ENCODE measurements at regions of chr12 and their contacts with region 1.

Region 1: GRCh38 chr12:55728939-55729823 is at the start of gene CD63:
- DNase-seq: peak; percentile 97
- total RNA-seq, gene CD63: 1,385 to 1,570 TPM

Region 2: DNA sequence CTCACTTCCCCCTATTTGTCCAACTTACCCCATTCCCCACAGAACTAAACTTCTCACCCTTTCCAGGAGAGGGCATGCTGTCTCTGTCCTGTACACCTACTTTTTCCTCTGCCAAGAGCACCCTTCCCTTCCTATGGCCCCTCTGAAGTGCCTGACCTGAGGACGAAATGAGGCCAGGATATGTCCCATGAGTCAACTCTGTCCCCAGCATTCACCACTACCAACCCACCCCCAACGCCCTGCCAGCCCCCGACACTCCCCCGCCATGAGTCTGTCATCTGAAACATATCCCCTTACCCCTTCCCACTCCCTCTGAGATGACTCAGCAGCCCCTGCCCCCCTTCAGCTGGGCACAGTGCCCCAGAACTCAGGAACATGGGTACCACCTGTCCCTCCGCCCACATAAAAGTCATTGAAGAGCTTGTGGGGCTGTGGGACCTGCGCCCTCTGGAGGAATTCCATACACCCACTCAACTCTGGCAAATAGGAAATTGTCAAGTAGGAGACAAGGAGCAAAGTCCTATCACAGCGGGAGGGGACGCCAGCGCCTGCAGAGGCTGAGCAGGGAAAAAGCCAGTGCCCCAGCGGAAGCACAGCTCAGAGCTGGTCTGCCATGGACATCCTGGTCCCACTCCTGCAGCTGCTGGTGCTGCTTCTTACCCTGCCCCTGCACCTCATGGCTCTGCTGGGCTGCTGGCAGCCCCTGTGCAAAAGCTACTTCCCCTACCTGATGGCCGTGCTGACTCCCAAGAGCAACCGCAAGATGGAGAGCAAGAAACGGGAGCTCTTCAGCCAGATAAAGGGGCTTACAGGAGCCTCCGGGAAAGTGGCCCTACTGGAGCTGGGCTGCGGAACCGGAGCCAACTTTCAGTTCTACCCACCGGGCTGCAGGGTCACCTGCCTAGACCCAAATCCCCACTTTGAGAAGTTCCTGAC is 47.8 kb before region 1 on chr12:
- intact Hi-C with region 1: loop called in 1 of 2 experiments (anchors 5 kb)
- DNase-seq: peak; percentile 82

Region 3: DNA sequence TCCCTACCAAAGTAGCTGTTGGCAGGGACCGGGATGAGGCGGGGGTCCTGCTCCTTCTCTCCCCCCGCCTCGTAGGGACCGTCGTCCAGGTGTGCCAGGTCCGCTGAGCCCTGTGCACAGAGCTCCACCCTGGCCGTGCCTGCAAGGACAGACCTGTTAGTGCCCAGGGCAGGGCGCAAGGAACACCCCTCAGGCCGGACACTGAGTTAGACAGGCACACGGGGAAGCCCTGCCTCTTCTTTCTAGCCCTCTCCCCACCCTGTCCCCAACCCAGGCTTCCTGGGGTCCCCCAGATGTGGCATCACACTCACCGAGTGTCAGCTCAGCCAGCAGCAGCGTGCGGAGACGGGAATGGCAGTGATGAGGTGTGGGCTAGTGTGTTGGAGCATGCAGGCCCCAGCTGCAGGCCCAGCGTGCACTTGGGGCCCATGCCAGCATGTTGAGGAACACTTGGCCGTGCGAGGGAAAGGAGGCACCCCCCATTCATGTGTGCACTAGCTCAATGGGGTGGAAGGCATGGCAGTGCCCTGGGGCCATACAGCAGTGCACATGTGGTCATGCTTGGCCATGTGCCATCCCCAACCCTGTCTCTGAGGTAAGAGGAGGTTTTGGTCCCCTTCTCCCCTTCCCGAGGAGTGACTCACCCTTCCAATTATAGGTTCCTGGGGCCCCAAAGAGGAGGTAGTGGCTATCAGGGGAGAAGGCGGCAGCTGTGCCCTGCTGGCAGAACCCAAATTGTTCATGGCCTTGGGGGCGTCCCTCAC is 28.7 kb before region 1 on chr12:
- intact Hi-C with region 1: loop called in 1 of 2 experiments (anchors 1 kb)
- DNase-seq: peak; percentile 81

Region 4: DNA sequence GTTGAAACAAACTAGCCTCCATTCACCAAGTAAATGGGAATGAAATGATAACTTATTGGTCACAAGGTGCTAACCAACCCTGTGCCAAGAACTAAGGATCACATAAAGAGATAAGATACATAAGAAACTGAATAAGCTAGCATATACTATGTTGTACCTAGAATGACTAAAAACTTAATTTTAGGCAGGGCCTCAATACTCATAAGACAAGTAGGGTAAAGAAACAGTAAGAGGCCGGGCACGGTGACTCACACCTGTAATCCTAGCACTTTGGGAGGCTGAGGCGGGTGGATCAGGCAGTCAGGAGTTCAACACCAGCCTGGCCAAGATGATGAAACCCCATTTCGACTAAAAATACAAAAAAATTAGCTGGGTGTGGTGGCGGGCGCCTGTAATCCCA is 31.5 kb after region 1 on chr12:
- intact Hi-C with region 1: no loop called
- DNase-seq: no peak

Region 5: GRCh38 chr12:55780685-55781084 is 51.5 kb after region 1 on chr12:
- intact Hi-C with region 1: no loop called
- DNase-seq: no peak